ENCODE measurements at regions of chr2 and their contacts with region 1.

Region 1: DNA sequence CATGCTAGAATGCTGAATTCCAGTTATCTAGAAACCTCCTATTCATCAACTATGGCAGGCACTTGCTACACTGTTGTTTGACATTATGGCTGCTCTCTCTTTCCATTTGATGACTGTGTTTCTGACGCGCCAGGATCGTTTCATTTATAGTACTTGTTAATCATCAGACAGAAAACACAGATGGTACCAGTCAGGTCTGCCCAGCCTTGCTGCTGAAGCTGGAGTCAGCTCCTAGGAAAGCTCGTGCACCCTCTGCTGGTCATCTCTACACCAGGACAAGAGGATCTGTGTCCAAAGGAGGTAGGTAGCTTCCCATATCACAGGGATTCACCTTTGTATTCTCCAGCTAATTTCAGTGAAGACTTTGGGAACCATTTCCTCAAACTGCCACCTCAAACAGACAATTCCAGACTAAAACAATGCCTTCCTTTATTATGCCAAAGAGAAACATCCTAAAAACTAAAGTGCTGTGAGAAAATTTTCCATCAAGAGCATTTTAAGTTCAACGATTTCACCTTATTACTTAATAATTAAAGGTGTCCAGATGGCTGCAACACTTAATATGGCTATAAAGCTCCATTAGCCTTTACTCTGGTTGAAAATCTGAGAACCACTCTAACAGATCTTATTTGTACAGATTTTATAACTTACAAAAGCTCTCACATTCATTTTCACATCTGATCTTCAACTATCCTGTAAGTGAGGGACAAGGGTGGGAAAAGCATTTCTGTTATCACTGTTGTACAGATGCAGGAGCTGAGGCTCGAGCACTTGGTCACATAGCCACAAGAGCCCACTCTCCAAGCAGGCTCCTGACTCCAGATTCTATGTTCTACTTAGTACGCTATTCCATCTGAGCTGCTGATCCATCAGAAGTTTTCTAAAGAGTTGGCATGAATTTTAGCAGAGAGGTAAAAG is 17.5 kb downstream of the METTL8 start:
- DNase-seq: peak; percentile 86
- ATAC-seq: peak; percentile 94
- H3K4me3 Mint-ChIP-seq: no peak overlapping the region
- H3K27ac Mint-ChIP-seq: peak overlapping the region; percentile 1
- H3K4me1 Mint-ChIP-seq: peaks cover 15% of the 10 kb centered on the region
- H3K27me3 Mint-ChIP-seq: no peaks in the 10 kb centered on the region

Region 2: DNA sequence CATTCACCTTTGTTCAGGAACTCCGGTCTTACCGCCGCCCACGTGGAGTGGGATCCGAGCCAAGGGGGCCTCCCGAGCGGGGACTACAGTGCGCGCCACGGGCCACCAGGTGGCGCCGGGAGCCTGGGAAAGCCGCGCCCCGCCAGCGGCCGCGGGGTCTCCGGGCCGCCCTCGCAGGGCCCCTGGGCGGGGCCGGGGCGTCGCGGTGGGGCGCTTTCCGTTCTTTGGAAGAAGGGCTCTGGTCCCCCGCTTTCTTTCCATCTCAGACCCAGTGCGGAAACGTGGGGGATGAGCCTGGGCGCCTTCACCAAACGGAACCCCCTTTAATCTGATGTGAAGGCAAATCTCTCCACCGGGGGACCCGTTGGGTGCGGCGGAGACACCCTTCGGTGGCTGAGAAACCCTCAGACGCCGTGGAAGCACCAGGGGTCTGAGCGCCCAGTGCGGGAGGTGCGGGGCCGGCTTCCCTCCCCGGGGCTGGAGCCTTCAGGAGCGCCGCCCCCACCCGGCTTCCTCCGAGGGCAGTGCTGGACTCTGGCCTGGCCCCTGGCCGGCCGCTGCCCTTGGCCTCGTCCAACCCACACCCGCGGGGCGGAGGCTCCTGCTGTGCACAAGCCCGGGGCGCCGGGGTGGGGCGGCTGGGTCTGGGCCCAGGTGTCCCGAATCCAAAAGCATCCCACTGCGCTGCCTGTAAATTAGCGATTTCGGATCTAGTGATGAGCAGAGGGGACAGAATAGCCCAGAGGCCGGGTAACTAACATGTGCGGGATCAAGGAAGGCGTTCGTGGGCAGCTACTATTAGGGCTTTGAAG is 442.6 kb before region 1 on chr2:
- CTCF ChIA-PET with region 1: interaction called, 38 read pairs
- POLR2A ChIA-PET with region 1: interaction called, 5 read pairs
- DNase-seq: peak; percentile 85
- ATAC-seq: peak; percentile 97
- H3K4me3 Mint-ChIP-seq: peak overlapping the region; percentile 76
- H3K27ac Mint-ChIP-seq: peak overlapping the region; percentile 79
- H3K4me1 Mint-ChIP-seq: peaks cover 14% of the 10 kb centered on the region
- H3K27me3 Mint-ChIP-seq: peaks cover 2% of the 10 kb centered on the region

Region 3: GRCh38 chr2:171086352-171087290 is 329.6 kb before region 1 on chr2:
- CTCF ChIA-PET with region 1: interaction called, 13 read pairs
- POLR2A ChIA-PET with region 1: no interaction called
- DNase-seq: peak; percentile 65
- ATAC-seq: peak; percentile 84
- H3K4me3 Mint-ChIP-seq: peak overlapping the region; percentile 63
- H3K27ac Mint-ChIP-seq: peak overlapping the region; percentile 62
- H3K4me1 Mint-ChIP-seq: peaks cover 40% of the 10 kb centered on the region
- H3K27me3 Mint-ChIP-seq: no peaks in the 10 kb centered on the region

Region 4: GRCh38 chr2:171134624-171135230 is 281.5 kb before region 1 on chr2:
- CTCF ChIA-PET with region 1: no interaction called
- POLR2A ChIA-PET with region 1: no interaction called
- DNase-seq: no peak
- ATAC-seq: no peak
- H3K4me3 Mint-ChIP-seq: no peak overlapping the region
- H3K27ac Mint-ChIP-seq: no peak overlapping the region
- H3K4me1 Mint-ChIP-seq: peaks cover 7% of the 10 kb centered on the region
- H3K27me3 Mint-ChIP-seq: no peaks in the 10 kb centered on the region

Region 5: GRCh38 chr2:171160119-171160955 is 255.9 kb before region 1 on chr2 and contains the start of gene TLK1:
- CTCF ChIA-PET with region 1: interaction called, 17 read pairs
- POLR2A ChIA-PET with region 1: no interaction called
- DNase-seq: peak; percentile 79
- ATAC-seq: peak; percentile 69
- H3K4me3 Mint-ChIP-seq: peak within 1 kb of the TSS; percentile 99
- H3K27ac Mint-ChIP-seq: peak within 1 kb of the TSS; percentile 96
- H3K4me1 Mint-ChIP-seq: peaks cover 57% of the 10 kb centered on the region
- H3K27me3 Mint-ChIP-seq: no peaks in the 10 kb centered on the region
- total RNA-seq, gene TLK1: 89.1 to 96.3 TPM

Region 6: GRCh38 chr2:171247741-171248662 is 168.3 kb before region 1 on chr2:
- CTCF ChIA-PET with region 1: interaction called, 12 read pairs
- POLR2A ChIA-PET with region 1: no interaction called
- DNase-seq: peak; percentile 55
- ATAC-seq: peak; percentile 94
- H3K4me3 Mint-ChIP-seq: peak overlapping the region; percentile 59
- H3K27ac Mint-ChIP-seq: peak overlapping the region; percentile 84
- H3K4me1 Mint-ChIP-seq: peaks cover 48% of the 10 kb centered on the region
- H3K27me3 Mint-ChIP-seq: peaks cover 4% of the 10 kb centered on the region

Region 7: GRCh38 chr2:171433763-171434670 is 17.7 kb after region 1 on chr2 and contains the starts of genes DCAF17 and METTL8:
- CTCF ChIA-PET with region 1: interaction called, 25 read pairs
- POLR2A ChIA-PET with region 1: interaction called, 6 read pairs
- DNase-seq: peak; percentile 95
- ATAC-seq: peak; percentile 95
- H3K4me3 Mint-ChIP-seq: peak within 1 kb of the TSS; percentile 92
- H3K27ac Mint-ChIP-seq: peak within 1 kb of the TSS; percentile 94
- H3K4me1 Mint-ChIP-seq: peaks cover 31% of the 10 kb centered on the region
- H3K27me3 Mint-ChIP-seq: no peaks in the 10 kb centered on the region
- total RNA-seq, gene DCAF17: 15.9 to 17.5 TPM
- total RNA-seq, gene METTL8: 20.9 to 22.4 TPM